ENCODE measurements at regions of chr1 and their contacts with region 1.

Region 1: GRCh38 chr1:230310381-230311163 is 115.6 kb downstream of the PGBD5 start:
- DNase-seq: peak; percentile 88
- ATAC-seq: peak; percentile 94

Region 2: DNA sequence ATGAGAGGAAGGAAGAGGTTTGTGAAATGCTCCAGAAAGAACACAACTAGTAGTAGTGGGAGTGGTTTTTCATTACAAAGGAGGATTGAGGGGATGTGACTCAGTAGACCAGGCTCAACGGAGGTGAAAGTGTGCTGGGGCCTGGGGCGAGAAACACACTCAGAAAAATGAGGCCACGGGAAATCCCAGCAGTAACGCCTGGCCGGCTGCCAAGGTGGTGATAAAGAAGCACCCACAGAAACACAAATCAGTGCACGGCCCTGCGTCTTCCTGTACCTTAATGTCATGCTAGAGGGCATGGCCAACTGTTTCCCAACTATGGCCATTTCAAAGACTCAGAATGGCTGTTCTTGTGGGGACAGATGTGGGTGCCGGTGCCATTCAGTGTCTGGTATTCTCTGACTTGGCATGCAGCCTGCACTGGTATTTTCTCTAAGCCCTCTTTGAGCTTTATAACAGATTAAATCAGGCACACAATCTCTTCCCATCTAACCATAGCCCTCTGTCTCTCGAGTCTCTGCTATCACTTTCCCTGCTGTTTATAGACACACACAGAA is 646.4 kb before region 1 on chr1:
- intact Hi-C with region 1: loop called (anchors 1 kb)
- DNase-seq: no peak
- ATAC-seq: no peak

Region 3: GRCh38 chr1:230231774-230232145 is 78.8 kb before region 1 on chr1:
- intact Hi-C with region 1: no loop called
- DNase-seq: peak; percentile 78
- ATAC-seq: peak; percentile 93

Region 4: GRCh38 chr1:230263568-230264195 is 46.9 kb before region 1 on chr1:
- intact Hi-C with region 1: no loop called
- DNase-seq: no peak
- ATAC-seq: no peak

Measured in sciatic nerve (tissue), 2 donors.